SK-N-SH (cell line): ENCODE measurements at regions of chr11 and their contacts with region 1.

Region 1: DNA sequence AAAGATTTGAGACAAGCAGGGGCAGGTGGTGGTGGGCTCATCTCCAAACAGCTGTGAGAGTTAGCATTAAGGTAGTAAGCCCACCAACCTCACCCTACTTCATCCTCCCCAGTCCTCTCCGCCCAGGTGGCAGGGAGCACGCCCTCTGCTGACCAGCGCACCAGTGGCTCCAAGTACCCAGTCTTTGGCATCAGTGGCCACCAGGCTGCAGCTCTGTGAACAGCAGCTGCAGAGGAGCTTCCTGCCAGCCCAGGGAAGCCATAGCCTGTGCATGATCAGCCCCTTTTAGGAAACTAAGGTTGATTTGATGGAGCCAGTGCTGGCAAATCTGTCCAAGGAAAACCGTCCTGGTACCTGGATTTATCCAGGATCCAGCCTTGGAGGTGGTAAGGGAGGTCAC is 21.7 kb downstream of the CAVIN3 start:
- DNase-seq: peak; percentile 27
- H3K4me3 ChIP-seq: no peak overlapping the region
- H3K27ac ChIP-seq: no peak overlapping the region
- H3K4me1 ChIP-seq: no peaks in the 10 kb centered on the region
- H3K27me3 ChIP-seq: peaks cover 17% of the 10 kb centered on the region; the same call in 1 of the 2 replicates
- CTCF ChIP-seq: peak; percentile 58
- EP300 ChIP-seq: no peak
- RAD21 ChIP-seq: peak; percentile 26; the same call in 1 of the 2 replicates

Region 2: DNA sequence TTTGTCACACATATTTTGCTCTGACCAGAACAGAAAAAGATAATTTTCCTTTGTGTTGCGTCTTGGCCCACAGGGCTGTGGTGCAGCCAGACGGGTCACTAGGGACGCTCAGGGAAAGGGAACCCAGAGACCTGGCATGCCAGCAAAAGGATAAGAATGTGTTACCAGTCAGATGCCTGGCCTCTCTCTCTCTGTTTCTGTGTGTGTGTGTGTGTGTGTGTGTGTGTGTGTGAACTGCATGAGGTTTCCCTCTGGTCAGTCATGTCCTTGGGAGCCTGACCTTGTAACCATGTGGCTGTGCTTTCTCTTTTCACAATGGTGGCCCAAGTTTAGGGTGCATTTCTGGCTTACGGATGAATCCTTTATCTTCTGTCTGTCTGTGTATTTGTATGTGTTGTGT is 13.6 kb before region 1 on chr11:
- CTCF ChIA-PET with region 1: interaction called, 11 read pairs
- POLR2A ChIA-PET with region 1: no interaction called
- DNase-seq: no peak
- H3K4me3 ChIP-seq: no peak overlapping the region
- H3K27ac ChIP-seq: no peak overlapping the region
- H3K4me1 ChIP-seq: no peaks in the 10 kb centered on the region
- H3K27me3 ChIP-seq: peaks cover 37% of the 10 kb centered on the region; the same call in 1 of the 2 replicates
- CTCF ChIP-seq: no peak
- EP300 ChIP-seq: no peak
- RAD21 ChIP-seq: no peak